CD8-positive, alpha-beta T cell (primary cell): ENCODE measurements at regions of chr6 and their contacts with region 1.

Region 1: DNA sequence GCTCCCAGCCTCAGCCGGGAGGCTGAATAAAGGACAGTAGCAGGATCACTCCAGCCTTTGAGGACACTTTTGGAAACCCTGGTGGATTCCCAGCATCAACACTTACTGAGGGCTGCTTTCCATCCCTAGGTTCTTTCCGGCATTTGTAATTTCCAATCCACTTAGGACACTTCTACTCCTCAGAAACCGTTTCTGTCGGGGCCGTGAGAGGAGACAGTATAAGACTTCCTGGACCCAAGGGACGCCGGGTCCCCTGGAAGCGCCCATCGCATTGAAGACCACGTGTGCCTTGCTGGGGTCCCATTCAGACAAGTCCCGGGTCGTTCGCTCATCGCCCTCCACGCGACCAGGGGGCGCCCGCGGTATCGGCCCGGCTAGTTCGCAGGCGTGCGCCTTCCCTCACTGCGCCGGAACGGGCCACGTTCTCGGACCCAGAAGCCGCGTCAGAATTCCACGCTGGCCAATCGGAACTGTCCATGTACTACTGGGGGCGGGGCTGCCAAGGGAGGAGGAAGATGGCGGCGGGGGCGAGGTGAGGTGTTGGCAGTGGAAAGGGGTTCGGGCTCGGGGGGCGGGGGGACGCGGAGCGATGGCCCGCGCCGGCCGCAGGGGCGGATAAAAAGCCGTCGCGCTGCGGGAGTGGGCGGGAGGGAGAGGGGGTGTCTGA is at the start of gene NUS1:
- DNase-seq: peak; percentile 98 to 99 (median 98)
- ATAC-seq: peak; percentile 96
- H3K4me3 ChIP-seq: peak within 1 kb of the TSS; percentile 75 to 79
- H3K4me3 Mint-ChIP-seq: peak within 1 kb of the TSS; percentile 91
- H3K27ac ChIP-seq: peak within 1 kb of the TSS; percentile 60 to 87
- H3K27ac Mint-ChIP-seq: peak within 1 kb of the TSS; percentile 94
- H3K4me1 ChIP-seq: peaks cover 38% of the 10 kb centered on the region
- H3K4me1 Mint-ChIP-seq: peaks cover 50% of the 10 kb centered on the region
- H3K27me3 ChIP-seq: no peaks in the 10 kb centered on the region
- H3K27me3 Mint-ChIP-seq: no peaks in the 10 kb centered on the region
- CTCF ChIP-seq: peak; percentile 67
- total RNA-seq, gene NUS1: 28.3 to 29.0 TPM

Region 2: DNA sequence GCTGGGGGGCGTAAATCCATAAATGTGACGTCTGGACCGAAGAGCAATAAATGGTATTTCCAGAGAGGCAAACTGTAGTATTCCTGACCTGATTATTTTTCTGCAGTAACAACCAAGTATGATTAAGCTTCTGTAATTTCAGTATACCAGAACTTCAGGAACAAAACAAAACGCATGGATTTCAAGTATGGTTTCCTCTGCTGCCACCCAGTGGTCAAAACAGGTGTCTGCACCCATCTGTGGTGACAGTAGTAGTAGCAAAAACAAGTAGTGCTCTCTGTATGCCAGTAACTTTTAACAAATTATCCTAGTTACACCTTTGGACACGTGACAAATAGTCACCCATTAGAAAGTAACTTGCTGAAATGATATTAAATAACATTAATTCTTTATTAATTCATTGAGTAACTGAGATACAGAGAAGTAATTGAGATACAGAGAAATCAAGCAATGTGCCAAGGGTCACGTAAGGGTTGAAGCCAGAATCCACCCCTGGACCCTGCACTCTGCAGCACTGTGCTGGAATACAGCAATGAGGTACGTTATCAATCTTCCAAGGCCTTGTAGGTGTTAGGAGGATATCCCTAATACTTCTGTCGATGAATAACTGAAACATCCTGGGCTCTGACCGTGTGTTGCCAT is 1113.6 kb before region 1 on chr6:
- CTCF ChIA-PET with region 1: no interaction called
- POLR2A ChIA-PET with region 1: no interaction called
- intact Hi-C with region 1: loop called in 1 of 2 experiments (anchors 10 kb)
- DNase-seq: peak; percentile 29 to 77 (median 67)
- ATAC-seq: peak; percentile 93
- H3K4me3 ChIP-seq: no peak overlapping the region
- H3K4me3 Mint-ChIP-seq: no peak overlapping the region
- H3K27ac ChIP-seq: no peak overlapping the region
- H3K27ac Mint-ChIP-seq: no peak overlapping the region
- H3K4me1 ChIP-seq: no peaks in the 10 kb centered on the region
- H3K4me1 Mint-ChIP-seq: peaks cover 3% of the 10 kb centered on the region
- H3K27me3 ChIP-seq: no peaks in the 10 kb centered on the region
- H3K27me3 Mint-ChIP-seq: peaks cover 9% of the 10 kb centered on the region
- CTCF ChIP-seq: peak; percentile 95

Region 3: DNA sequence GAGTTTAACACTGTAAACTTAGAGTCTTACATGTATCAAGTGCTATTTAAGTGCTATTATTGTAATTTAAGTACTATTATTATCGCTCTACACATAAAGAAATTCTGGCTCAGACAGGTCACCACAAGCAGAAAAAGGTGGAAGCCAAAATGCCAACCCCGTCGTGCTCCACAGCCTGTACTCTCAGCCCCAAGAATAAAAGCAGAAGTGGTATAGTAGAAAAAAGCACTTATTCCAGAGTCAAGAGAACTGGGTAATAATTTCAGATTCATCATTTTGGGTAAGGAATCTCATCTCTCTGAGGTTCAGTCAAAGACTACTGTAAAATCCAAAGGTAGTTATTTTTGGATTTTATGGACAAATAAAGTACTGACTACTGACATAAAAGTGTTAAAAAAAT is 1007.5 kb before region 1 on chr6:
- CTCF ChIA-PET with region 1: no interaction called
- POLR2A ChIA-PET with region 1: no interaction called
- intact Hi-C with region 1: loop called in 1 of 2 experiments (anchors 10 kb)
- DNase-seq: no peak
- ATAC-seq: no peak
- H3K4me3 ChIP-seq: peak overlapping the region; percentile 71 to 83
- H3K4me3 Mint-ChIP-seq: peak overlapping the region; percentile 99
- H3K27ac ChIP-seq: peak overlapping the region; percentile 70 to 84
- H3K27ac Mint-ChIP-seq: no peak overlapping the region
- H3K4me1 ChIP-seq: peaks cover 33% of the 10 kb centered on the region
- H3K4me1 Mint-ChIP-seq: peaks cover 44% of the 10 kb centered on the region
- H3K27me3 ChIP-seq: no peaks in the 10 kb centered on the region
- H3K27me3 Mint-ChIP-seq: no peaks in the 10 kb centered on the region
- CTCF ChIP-seq: no peak

Region 4: DNA sequence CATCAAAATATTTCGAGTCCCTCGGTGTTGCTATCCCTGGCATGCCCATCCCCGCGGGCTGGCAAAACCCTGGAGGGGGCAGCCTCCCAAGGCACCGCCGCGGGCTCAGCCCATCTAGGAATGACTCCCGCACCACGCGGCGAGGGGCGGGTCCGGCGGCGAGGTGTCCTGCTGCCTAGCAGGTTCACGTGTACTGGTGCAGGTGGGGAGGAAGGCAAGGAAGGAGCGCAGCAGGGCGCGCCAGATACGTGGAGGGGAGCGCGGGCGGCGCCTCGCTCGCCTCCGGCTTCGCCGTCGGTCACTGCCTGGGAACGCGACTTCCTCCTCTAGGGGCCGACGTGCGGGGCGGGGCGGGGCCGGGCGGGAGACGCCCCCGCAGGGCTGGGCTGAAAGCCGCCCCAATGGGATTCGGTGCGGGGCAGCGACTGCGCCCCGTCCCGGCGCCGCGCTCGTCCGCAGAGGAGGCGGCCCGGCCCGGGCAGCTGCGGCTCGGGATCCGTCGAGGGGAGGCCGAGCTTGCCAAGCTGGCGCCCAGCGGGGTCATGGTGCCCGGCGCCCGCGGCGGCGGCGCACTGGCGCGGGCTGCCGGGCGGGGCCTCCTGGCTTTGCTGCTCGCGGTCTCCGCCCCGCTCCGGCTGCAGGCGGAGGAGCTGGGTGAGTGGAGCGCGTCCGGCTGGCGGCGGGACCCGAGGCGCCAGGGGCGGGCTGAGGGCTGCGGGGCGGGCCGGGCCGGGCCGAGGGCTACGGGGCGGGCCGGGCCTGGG is 192.7 kb before region 1 on chr6 and contains the start of gene DCBLD1:
- CTCF ChIA-PET with region 1: no interaction called
- POLR2A ChIA-PET with region 1: no interaction called
- intact Hi-C with region 1: loop called in 1 of 2 experiments (anchors 5 kb)
- DNase-seq: peak in 8 of 9 experiments; percentile 21 to 75 (median 47)
- ATAC-seq: peak; percentile 66
- H3K4me3 ChIP-seq: peak within 1 kb of the TSS; percentile 72 to 74
- H3K4me3 Mint-ChIP-seq: peak within 1 kb of the TSS; percentile 90
- H3K27ac ChIP-seq: no peak within 1 kb of the TSS
- H3K27ac Mint-ChIP-seq: peak within 1 kb of the TSS; percentile 47
- H3K4me1 ChIP-seq: peaks cover 16% of the 10 kb centered on the region
- H3K4me1 Mint-ChIP-seq: peaks cover 17% of the 10 kb centered on the region
- H3K27me3 ChIP-seq: no peaks in the 10 kb centered on the region
- H3K27me3 Mint-ChIP-seq: peaks cover 31% of the 10 kb centered on the region
- CTCF ChIP-seq: no peak
- total RNA-seq, gene DCBLD1: 2.0 to 2.1 TPM

Region 5: GRCh38 chr6:118551063-118552053 is 876.2 kb after region 1 on chr6:
- CTCF ChIA-PET with region 1: no interaction called
- POLR2A ChIA-PET with region 1: no interaction called
- intact Hi-C with region 1: loop called in 1 of 2 experiments (anchors 5 kb)
- DNase-seq: peak in 2 of 9 experiments; percentile 54 to 70
- ATAC-seq: peak; percentile 97
- H3K4me3 ChIP-seq: no peak overlapping the region
- H3K4me3 Mint-ChIP-seq: peak overlapping the region; percentile 8
- H3K27ac ChIP-seq: no peak overlapping the region
- H3K27ac Mint-ChIP-seq: peak overlapping the region; percentile 73
- H3K4me1 ChIP-seq: peaks cover 7% of the 10 kb centered on the region
- H3K4me1 Mint-ChIP-seq: peaks cover 51% of the 10 kb centered on the region
- H3K27me3 ChIP-seq: no peaks in the 10 kb centered on the region
- H3K27me3 Mint-ChIP-seq: no peaks in the 10 kb centered on the region
- CTCF ChIP-seq: peak; percentile 79

Region 6: DNA sequence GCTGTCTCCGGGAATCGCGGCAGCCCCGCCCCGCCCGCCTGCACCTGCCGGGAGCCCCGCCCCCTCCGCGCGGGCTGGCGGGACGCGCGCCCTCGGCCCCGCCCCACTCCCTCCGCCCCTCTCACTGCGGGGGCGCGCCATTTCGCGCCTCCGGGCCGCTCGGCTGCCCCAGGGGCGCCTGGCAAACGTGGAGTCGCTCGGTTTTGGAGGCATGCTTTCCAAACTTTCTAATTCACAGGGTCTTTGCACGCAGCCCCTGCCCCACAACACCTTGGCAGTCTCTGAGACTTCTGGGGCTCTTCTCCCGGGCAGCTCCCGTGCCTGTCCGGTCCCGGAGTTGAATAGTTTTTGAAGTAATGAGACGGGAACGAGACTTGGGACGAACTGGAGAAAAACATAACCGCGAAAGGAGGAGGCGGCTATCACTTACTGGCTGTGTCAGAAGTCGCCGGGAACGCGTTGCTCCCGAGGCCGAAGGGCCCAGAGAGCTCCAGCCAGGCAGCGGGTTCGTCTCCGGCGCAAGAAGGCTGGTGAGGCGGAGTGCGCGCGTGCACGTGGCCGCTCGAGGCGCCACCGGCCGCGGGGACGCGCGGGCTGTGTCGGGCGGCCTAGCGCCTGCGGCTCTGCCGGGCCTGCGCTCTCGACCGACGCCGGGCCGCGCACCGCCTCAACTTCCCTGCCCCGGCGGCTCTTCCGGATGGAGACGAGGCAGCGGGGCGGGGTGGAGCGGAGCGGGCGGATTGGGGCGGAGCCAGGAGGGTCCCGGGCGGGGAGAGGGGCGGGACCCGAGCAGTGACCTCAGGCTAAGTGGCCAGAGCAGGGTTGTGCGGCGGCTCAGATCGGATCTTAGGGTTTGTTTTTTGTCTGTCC is 1259.6 kb after region 1 on chr6 and contains the start of gene MCM9:
- CTCF ChIA-PET with region 1: no interaction called
- POLR2A ChIA-PET with region 1: no interaction called
- intact Hi-C with region 1: loop called (anchors 10 kb)
- DNase-seq: peak; percentile 76 to 95 (median 84)
- ATAC-seq: peak; percentile 87
- H3K4me3 ChIP-seq: peak within 1 kb of the TSS; percentile 96 to 97
- H3K4me3 Mint-ChIP-seq: peak within 1 kb of the TSS; percentile 91
- H3K27ac ChIP-seq: peak within 1 kb of the TSS; percentile 87 to 89
- H3K27ac Mint-ChIP-seq: peak within 1 kb of the TSS; percentile 90
- H3K4me1 ChIP-seq: peaks cover 7% of the 10 kb centered on the region
- H3K4me1 Mint-ChIP-seq: peaks cover 43% of the 10 kb centered on the region
- H3K27me3 ChIP-seq: no peaks in the 10 kb centered on the region
- H3K27me3 Mint-ChIP-seq: no peaks in the 10 kb centered on the region
- CTCF ChIP-seq: no peak
- total RNA-seq, gene MCM9: 32.9 to 34.1 TPM